Right lobe of liver (tissue), 6 donors: ENCODE measurements at regions of chr7 and their contacts with region 1.

Region 1: GRCh38 chr7:1503816-1504775 is at the start of gene INTS1:
- DNase-seq: peak; percentile 93 to 95 (median 95)
- ATAC-seq: peak; percentile 93 to 97 (median 94)
- H3K4me3 ChIP-seq: peak within 1 kb of the TSS; percentile 98 to 100 (median 100)
- H3K27ac ChIP-seq: peak within 1 kb of the TSS in 2 of 3 donors; percentile 40 to 46
- H3K4me1 ChIP-seq: peaks cover 0 to 8% (median 3%) of the 10 kb centered on the region in 4 donors
- H3K27me3 ChIP-seq: no peaks in the 10 kb centered on the region
- CTCF ChIP-seq: peak; percentile 91 to 98 (median 94)
- POLR2A ChIP-seq: peak; percentile 69
- total RNA-seq, gene INTS1: 30.1 to 49.6 (median 41.2) TPM

Region 2: DNA sequence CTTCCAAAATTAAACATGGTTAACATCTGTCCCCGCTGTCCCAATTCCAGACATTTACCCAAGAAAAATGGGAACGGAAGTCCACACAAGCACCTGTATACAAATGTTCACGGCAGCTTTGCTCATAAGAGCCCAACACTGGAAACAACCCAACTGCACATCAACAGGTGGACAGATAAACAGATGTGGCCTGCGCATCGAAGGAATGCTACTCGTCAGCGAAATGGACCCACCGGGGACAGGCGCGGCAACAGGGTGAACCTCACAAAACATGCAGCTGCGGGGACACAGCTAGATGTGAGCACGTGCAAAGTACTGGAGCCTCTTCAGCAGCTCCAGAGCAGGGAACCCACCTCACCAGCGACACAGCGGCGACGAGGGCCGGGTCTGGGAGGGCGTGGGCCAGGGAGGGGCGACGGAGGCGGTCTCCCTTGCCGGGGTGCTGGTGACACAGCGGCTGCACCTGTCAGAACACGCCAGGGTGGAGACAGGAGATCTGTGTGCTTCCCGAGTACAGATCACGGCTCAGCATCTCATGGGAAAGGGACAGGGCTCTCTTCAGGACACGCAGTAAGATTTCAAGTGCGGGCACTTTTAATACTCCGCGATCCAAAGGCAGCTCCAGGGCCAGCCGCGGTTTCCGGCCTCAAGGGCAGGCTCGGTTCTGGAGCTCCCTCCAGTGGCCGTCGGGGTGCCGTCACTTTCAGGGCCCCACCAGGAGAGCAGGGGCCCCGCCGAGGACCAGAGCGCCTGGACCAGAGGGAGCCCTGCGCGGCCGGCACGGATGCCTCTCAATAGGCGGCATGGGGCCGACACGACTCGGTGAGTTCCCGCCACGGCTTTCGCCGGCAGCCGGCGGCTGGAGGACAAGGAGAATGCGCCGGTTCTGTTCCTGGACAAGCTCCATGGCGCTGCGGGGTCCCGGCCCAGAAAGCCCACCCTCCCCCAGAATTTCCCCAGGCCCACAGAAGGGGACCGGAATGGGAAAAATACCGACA is 438.5 kb before region 1 on chr7:
- intact Hi-C with region 1: no loop called
- DNase-seq: peak; percentile 83 to 88 (median 85)
- ATAC-seq: peak; percentile 94 to 98 (median 98)
- H3K4me3 ChIP-seq: no peak overlapping the region
- H3K27ac ChIP-seq: no peak overlapping the region
- H3K4me1 ChIP-seq: peaks cover 0 to 11% (median 1%) of the 10 kb centered on the region in 4 donors
- H3K27me3 ChIP-seq: no peaks in the 10 kb centered on the region
- CTCF ChIP-seq: peak; percentile 84 to 97 (median 89)
- POLR2A ChIP-seq: no peak

Region 3: GRCh38 chr7:1550008-1550860 is 46.1 kb after region 1 on chr7:
- intact Hi-C with region 1: loop called in 1 of 2 experiments (anchors 5 kb)
- DNase-seq: no peak
- ATAC-seq: no peak
- H3K4me3 ChIP-seq: no peak overlapping the region
- H3K27ac ChIP-seq: no peak overlapping the region
- H3K4me1 ChIP-seq: peaks cover 0 to 5% (median 0%) of the 10 kb centered on the region in 4 donors
- H3K27me3 ChIP-seq: no peaks in the 10 kb centered on the region
- CTCF ChIP-seq: no peak
- POLR2A ChIP-seq: no peak

Region 4: DNA sequence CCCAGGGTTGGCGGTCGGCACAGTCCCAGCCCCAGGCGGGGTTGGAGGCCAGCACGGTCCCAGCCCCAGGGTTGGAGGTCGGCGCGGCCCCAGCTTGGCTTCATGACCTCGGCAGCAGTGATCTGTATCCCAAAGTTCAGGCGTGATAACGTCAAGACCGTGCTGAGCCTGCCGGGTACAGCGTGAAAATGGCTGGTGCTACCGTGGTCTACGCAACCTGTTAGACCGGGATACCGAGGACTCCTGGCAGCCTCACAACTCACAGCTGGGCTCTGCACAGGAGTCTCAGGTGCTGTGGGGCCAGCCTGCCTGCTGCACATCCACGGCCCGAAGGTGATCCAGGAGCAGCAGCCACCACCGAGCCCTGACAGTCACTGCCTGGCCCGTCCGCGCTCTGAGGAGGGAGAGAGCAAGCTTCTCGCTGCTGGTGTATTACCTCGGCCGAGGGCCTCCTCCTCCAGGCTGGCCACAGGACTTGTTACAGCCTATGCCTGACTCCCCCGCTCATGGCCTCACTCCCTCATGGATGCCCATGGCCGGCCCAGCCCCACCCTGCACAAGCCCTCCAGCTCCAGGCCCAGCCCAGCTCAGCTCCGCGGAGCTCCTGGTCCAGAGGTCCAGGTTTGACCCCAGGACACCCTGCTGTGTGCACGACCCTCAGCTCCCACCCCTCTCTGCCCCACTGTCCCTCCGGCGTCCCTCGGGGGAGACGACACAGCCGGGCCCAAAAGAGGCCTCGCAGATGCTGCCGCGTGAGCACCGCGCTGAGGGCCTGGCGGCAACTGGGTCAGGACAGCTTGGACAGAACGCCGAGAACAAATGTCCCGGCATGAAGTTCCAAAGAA is 322.0 kb after region 1 on chr7:
- intact Hi-C with region 1: no loop called
- DNase-seq: peak in 1 of 3 donors; percentile 40
- ATAC-seq: peak in 1 of 4 donors; percentile 9
- H3K4me3 ChIP-seq: no peak overlapping the region
- H3K27ac ChIP-seq: no peak overlapping the region
- H3K4me1 ChIP-seq: no peaks in the 10 kb centered on the region
- H3K27me3 ChIP-seq: no peaks in the 10 kb centered on the region
- CTCF ChIP-seq: no peak
- POLR2A ChIP-seq: no peak